ENCODE measurements at regions of chr17 and their contacts with region 1.

Region 1: DNA sequence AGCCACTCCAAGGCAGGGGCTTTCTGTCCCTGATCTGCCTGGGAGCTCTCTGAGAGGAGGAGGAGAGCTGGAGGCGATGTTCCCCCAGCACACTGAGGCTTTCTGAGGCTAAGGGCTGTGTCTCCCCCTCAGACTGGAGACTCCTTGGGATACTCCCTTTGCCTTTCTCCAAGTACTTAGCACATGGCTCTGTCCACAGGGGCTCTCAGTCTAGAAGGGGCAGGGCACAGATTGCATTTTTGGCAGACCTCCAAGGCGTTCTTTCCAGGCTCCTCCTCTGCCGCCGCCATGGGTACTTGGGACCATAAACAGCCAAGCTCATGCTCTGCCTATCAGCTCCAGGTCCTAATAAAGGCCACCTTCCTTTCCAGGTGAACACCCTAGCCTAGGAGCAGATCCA is 1.8 kb upstream of the GIP start:
- DNase-seq: no peak
- H3K4me3 ChIP-seq: no peak overlapping the region
- H3K27ac ChIP-seq: no peak overlapping the region
- H3K4me1 ChIP-seq: peaks cover 13% of the 10 kb centered on the region
- H3K27me3 ChIP-seq: no peaks in the 10 kb centered on the region
- CTCF ChIP-seq: no peak
- POLR2A ChIP-seq: no peak

Region 2: GRCh38 chr17:48236681-48237134 is 733.5 kb before region 1 on chr17:
- intact Hi-C with region 1: loop called (anchors 5 kb)
- DNase-seq: no peak
- H3K4me3 ChIP-seq: no peak overlapping the region
- H3K27ac ChIP-seq: no peak overlapping the region
- H3K4me1 ChIP-seq: peaks cover 16% of the 10 kb centered on the region
- H3K27me3 ChIP-seq: no peaks in the 10 kb centered on the region
- CTCF ChIP-seq: no peak
- POLR2A ChIP-seq: no peak